Activated T-helper 1 cell treated with anti-CD3 and anti-CD28 coated beads, Interleukin-12 subunit alpha, Interleukin-12 subunit beta, Interleukin-2, Interleukin-4 antibody, amounts not matched to agents 30 ng/mL and 10 ng/mL and 1 ng/mL, durations not matched to agents 14 hours and 24 hours and 36 hours (primary cell): ENCODE measurements at regions of chr13 and their contacts with region 1.

Region 1: GRCh38 chr13:31044377-31045285 is 112.2 kb downstream of the TEX26 start:
- DNase-seq: peak; percentile 78
- H3K4me3 Mint-ChIP-seq: peak overlapping the region; percentile 67
- H3K27ac Mint-ChIP-seq: peak overlapping the region; percentile 89
- H3K4me1 Mint-ChIP-seq: peaks cover 14% of the 10 kb centered on the region
- H3K27me3 Mint-ChIP-seq: peaks cover 2% of the 10 kb centered on the region

Region 2: DNA sequence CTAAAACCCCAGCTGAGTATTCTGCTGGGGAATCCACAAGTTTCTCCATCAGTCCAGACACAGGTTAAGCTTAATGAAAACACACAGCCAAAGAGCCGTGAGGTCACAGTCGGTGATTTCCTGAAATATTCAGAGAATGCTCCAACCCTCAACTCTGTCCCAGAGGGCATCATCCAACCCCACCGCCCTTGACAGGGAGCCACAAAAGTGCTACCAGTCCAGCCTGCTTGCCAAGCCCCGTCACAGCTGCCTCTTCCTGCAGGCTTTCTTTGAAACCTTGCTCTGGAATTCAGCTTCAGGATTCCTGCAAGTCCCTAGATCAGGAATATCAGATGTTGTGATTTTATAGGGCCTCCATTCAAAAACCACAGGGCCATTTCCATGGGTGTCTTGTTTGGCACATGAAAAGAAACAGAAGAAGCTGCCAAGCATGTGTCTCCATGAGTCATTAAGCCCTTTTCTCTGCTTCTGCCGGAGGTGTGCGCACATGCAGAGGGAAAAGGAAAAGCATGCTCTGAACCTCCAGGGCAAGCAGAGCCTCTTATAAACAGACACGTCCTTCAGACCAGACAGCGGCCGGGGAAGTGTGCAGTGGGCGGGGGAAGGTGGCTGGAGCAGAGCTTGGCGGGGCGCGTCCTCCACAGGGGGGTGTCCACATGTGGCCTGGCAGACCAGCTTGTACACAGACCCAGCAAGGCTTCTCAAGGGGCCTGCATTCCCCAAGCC is 902.0 kb before region 1 on chr13:
- intact Hi-C with region 1: loop called (anchors 1 kb)
- DNase-seq: peak; percentile 28
- H3K4me3 Mint-ChIP-seq: peak overlapping the region; percentile 31
- H3K27ac Mint-ChIP-seq: peak overlapping the region; percentile 86
- H3K4me1 Mint-ChIP-seq: peaks cover 61% of the 10 kb centered on the region
- H3K27me3 Mint-ChIP-seq: peaks cover 4% of the 10 kb centered on the region

Region 3: DNA sequence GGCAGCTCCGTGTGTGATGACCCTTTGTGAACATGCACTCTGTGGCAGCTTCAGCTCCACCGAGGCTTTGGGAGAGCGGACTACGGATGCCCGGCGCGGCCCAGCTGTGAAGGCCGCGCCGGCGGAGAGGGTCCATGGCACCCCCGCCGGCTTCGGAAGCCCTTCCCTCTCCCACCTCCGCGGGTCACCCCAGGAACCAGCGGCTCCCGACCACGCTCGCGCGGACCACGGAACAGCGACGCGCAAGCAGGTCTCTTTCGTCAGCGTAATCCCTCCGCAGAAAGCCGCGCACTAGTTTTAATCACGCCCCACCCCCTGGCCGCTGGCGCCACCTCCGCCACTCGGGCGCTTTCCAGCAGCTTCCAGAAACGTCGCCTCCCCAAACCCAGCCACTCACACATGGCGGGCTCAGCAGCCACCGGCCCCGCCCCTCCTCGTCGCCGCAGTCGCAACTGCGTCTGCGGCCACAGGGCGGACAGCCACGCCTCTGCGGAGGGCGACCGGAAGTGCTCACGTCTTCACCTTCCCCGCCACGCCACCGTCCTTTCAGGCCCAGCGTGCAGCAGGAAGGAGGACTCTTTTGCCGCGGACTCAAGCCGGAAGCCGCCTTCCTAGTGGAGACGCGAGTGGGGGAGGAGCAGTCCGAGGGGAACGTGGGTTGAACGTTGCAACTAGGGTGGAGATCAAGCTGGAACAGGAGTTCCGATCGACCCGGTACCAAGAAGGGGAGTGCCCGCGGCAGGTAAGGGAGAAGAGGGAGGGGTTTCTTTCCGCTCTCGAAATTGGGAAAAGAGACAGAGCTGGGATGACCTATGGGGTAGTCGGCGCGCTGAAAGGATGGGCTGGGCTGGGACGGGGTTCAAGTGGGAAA is 427.1 kb before region 1 on chr13 and contains the start of gene USPL1:
- intact Hi-C with region 1: loop called (anchors 1 kb)
- DNase-seq: peak; percentile 99
- H3K4me3 Mint-ChIP-seq: no peak within 1 kb of the TSS
- H3K27ac Mint-ChIP-seq: no peak within 1 kb of the TSS
- H3K4me1 Mint-ChIP-seq: peaks cover 12% of the 10 kb centered on the region
- H3K27me3 Mint-ChIP-seq: no peaks in the 10 kb centered on the region
- total RNA-seq, gene USPL1: 17.2 and 17.5 TPM in 2 replicates

Region 4: GRCh38 chr13:30865123-30866049 is 179.2 kb before region 1 on chr13:
- intact Hi-C with region 1: loop called (anchors 1 kb)
- DNase-seq: peak; percentile 9
- H3K4me3 Mint-ChIP-seq: no peak overlapping the region
- H3K27ac Mint-ChIP-seq: no peak overlapping the region
- H3K4me1 Mint-ChIP-seq: no peaks in the 10 kb centered on the region
- H3K27me3 Mint-ChIP-seq: peaks cover 11% of the 10 kb centered on the region

Region 5: DNA sequence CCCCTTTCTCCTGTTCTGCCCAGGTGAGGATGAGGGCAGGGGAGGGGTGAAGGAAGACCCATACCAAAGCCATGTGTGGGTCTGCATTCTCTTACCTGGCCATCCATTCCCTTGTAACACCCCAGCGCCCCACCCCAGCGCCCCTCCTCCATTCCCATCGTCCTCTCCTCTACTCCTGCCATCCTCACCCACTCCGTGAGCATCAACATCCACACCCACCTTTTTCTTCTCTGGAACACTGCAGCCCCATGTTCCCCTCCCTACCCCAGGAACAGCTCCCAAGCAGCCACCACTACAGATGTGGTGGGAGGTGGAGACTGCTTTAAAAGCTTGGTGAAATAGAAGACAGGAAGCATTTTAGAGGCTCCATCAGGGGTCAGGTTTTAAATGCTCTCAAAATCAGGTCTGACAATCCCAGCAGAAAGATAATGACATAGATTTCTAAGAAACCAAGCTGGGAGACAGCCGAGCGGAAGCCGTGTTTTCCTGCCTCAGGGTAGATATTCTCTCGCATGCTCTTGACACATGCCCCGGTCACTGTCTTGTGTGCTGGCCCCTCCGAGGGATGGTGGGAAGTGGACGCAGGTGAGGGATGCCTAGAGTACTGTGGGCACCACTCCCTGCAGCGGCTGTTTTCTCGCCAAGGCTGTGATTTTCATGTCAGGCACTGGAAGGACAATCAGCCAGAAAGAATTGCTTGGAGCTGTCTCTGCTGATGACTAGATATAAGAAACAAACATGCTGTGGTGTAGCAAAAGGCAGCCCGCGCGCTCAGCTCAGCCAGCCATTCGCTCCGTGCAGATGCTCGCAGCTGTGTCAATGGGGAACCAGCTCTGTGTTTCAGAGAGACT is 128.7 kb before region 1 on chr13:
- intact Hi-C with region 1: no loop called
- DNase-seq: no peak
- H3K4me3 Mint-ChIP-seq: no peak overlapping the region
- H3K27ac Mint-ChIP-seq: no peak overlapping the region
- H3K4me1 Mint-ChIP-seq: no peaks in the 10 kb centered on the region
- H3K27me3 Mint-ChIP-seq: peaks cover 39% of the 10 kb centered on the region

Region 6: GRCh38 chr13:31056644-31057271 is 12.1 kb after region 1 on chr13:
- intact Hi-C with region 1: loop called (anchors 1 kb)
- DNase-seq: no peak
- H3K4me3 Mint-ChIP-seq: no peak overlapping the region
- H3K27ac Mint-ChIP-seq: no peak overlapping the region
- H3K4me1 Mint-ChIP-seq: peaks cover 2% of the 10 kb centered on the region
- H3K27me3 Mint-ChIP-seq: peaks cover 2% of the 10 kb centered on the region

Region 7: GRCh38 chr13:31161828-31162590 is 117.4 kb after region 1 on chr13 and contains the start of gene HSPH1:
- intact Hi-C with region 1: loop called (anchors 1 kb)
- DNase-seq: peak; percentile 99
- H3K4me3 Mint-ChIP-seq: peak within 1 kb of the TSS; percentile 98
- H3K27ac Mint-ChIP-seq: peak within 1 kb of the TSS; percentile 96
- H3K4me1 Mint-ChIP-seq: peaks cover 44% of the 10 kb centered on the region
- H3K27me3 Mint-ChIP-seq: no peaks in the 10 kb centered on the region
- total RNA-seq, gene HSPH1: 310 and 326 TPM in 2 replicates

Region 8: DNA sequence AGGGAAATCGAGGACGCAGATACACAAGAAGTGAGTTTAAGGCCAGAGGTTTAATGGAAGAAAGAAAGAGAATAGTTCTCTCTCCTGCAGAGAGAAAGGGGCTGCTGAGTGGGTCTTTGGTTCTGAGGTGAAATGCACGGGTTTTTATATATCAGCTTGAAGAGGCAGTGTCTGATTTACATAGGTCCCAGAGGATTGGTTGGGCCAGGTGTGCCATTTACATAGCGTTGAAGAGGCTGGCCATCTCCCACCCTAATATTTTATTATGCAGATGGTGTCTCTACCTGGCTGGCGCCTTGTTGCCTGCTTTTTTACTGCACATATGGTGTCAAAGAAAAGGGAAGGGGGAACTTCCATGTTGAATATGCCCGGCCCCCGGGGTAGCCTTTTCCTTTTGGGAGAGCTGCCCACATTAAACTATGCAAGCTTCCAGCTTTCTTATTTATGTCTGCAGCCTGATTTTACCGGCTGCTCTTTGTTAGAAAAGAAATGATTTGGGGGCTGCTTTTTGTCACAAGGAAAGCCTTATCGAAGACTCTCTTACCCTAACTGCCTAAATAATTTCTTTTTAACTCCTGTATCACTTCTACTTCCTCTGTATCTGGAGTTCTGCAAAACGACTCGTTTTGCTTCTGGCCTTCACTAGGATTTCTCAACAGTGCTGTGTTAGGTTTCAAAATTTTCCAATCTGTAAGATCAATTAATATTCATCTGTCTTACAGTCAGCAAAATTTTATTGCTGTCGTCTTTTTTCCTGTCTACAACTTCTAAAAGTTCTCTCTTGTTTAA is 423.7 kb after region 1 on chr13:
- intact Hi-C with region 1: no loop called
- DNase-seq: no peak
- H3K4me3 Mint-ChIP-seq: no peak overlapping the region
- H3K27ac Mint-ChIP-seq: no peak overlapping the region
- H3K4me1 Mint-ChIP-seq: no peaks in the 10 kb centered on the region
- H3K27me3 Mint-ChIP-seq: peaks cover 1% of the 10 kb centered on the region